GM13976 (cell line): ENCODE measurements at regions of chr5 and their contacts with region 1.

Region 1: DNA sequence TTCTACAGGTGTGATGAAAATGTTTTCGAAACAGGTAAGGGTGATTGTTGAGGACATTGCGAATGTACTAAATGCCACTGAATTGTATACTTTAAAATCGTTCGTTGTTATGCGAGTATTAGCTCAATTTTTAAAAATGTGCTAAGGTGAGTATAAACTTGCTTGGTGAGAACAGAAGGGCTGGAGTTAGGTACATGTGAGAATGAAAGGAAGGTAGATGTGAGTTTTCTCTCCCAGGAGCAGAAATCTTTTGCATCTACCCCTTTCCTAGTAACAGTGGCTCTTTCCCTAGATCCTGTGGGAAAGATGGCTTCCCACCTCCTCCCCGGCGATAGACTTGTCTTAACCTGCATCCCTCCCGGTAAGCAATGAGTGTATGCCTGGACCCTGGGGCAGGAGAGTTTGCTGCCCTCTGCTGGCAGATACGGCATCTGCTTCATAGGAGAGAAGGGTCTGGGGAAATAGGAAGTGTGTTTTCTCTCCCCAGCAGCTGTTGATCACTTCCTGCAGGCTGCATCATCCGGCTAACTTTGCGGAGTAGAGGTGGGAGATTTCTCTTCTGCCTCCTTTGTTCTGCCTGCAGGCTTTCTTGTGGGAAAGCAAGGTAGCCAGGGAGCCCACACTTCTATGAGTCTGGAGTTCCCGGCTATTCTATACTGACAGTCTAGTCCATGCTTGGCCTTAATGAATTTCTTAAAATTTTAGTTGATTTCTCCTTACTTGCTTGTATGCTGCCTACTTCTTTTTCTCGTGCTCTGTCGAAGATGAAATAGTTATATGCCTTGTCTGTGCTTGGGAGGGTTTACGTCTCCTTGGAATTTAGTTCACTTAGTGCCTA is 373.3 kb upstream of the SEMA6A start:
- DNase-seq: peak; percentile 61
- CTCF ChIP-seq: peak; percentile 75

Region 2: GRCh38 chr5:116137544-116138378 is 810.1 kb before region 1 on chr5:
- in situ Hi-C with region 1: loop called (anchors 25 kb)
- DNase-seq: peak; percentile 32
- CTCF ChIP-seq: peak; percentile 52

Region 3: DNA sequence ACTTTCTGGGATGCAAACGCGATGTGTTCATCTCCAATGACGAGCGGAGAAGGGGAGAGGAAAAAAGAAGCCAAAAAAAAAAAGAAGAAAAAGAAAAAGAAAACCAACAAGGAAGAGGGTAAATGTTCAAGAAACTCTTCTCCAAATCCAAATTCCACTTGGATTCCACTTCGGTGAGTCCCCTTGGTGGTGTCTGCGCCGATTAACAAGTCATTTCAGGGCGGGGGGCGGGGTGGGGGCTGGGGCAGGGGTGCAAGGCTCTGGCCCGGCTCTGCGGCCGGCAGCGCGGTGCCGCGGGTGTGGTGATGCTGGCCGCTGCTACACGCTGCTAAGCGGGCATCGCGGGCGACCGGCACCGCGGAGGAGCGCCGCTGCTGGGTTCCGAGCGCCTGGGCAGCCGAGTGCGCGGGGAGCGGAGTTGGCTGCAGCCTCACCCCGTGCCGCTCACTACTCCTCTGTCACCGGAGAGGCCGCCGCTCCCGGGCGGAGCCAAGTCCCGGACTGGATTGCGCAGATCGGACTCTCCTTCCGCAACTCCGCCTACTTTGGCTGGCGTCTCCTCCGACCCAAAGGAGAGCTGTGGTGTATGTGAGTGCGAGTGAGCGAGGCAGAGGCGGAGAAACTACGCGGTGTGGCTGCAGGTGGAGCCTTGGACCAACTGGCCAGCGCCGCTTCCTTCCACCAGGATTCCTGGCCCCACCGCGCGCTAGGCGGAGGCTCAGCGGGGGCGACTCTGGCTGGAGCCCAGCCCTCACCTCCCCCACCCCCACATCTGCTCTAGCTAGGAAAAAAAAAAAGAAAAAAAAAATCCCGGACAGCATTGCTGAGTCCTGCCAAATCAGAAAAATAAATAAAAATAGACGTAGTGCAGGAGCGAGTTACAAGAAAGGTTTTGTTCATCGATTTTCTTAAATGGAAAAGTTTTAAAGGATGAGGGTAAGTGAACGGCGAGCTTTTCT is 373.3 kb before region 1 on chr5 and contains the start of gene SEMA6A:
- in situ Hi-C with region 1: loop called (anchors 10 kb)
- DNase-seq: peak; percentile 89
- CTCF ChIP-seq: no peak

Region 4: DNA sequence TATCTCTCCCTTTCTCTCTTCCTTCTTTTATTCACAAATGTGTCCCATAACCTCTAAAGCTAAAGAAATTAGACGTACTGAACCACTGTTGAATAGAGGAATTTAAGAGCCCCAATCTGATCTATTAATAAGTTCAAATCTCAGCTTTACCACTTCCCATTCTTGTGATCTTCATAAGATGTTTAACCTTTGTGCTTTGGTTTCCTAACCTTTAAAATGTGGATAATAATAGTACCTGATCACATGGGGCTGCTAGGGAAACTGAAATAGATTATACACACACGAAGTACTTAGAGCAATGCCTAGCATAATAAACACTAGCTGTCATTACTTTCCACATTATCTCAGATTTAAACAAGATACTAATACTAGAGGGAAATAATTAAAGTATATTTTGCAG is 49.0 kb before region 1 on chr5:
- in situ Hi-C with region 1: no loop called
- DNase-seq: no peak
- CTCF ChIP-seq: no peak